Naive thymus-derived CD8-positive, alpha-beta T cell (primary cell): ENCODE measurements at regions of chr6 and their contacts with region 1.

Region 1: GRCh38 chr6:53335208-53335994 is 13.3 kb downstream of the ELOVL5 start:
- DNase-seq: peak; percentile 28 to 89 (median 72)
- ATAC-seq: peak; percentile 73 to 85
- H3K4me3 Mint-ChIP-seq: peak overlapping the region; percentile 84 to 99 (median 90)
- H3K27ac Mint-ChIP-seq: peak overlapping the region; percentile 96 to 100 (median 100)
- H3K4me1 Mint-ChIP-seq: peaks cover 43 to 96% (median 88%) of the 10 kb centered on the region in 4 donors
- H3K27me3 Mint-ChIP-seq: no peaks in the 10 kb centered on the region

Region 2: DNA sequence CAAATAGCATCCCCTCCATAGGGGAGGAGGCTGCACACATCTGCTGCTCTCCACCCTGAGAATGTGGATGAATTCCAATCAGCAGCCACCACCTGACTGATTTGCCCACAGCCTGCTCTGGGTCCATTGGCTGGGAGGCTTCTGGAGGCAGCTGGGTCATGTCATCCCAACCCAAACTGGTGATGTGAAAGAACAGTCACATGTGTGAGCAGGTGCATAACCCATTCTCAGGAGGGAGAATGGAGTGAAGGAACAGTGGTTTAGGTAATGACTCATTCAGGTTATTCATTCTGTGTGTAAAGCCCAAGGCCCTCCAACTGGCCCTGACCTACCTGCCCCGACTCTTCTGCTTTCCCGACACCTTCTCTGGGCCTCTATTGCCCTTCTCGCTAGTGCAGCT is 95.9 kb before region 1 on chr6:
- POLR2A ChIA-PET with region 1: no interaction called
- DNase-seq: no peak
- ATAC-seq: no peak
- H3K4me3 Mint-ChIP-seq: no peak overlapping the region
- H3K27ac Mint-ChIP-seq: peak overlapping the region in 1 of 10 donors; percentile 16
- H3K4me1 Mint-ChIP-seq: peaks cover 10 to 76% (median 25%) of the 10 kb centered on the region in 4 donors
- H3K27me3 Mint-ChIP-seq: no peaks in the 10 kb centered on the region

Region 3: DNA sequence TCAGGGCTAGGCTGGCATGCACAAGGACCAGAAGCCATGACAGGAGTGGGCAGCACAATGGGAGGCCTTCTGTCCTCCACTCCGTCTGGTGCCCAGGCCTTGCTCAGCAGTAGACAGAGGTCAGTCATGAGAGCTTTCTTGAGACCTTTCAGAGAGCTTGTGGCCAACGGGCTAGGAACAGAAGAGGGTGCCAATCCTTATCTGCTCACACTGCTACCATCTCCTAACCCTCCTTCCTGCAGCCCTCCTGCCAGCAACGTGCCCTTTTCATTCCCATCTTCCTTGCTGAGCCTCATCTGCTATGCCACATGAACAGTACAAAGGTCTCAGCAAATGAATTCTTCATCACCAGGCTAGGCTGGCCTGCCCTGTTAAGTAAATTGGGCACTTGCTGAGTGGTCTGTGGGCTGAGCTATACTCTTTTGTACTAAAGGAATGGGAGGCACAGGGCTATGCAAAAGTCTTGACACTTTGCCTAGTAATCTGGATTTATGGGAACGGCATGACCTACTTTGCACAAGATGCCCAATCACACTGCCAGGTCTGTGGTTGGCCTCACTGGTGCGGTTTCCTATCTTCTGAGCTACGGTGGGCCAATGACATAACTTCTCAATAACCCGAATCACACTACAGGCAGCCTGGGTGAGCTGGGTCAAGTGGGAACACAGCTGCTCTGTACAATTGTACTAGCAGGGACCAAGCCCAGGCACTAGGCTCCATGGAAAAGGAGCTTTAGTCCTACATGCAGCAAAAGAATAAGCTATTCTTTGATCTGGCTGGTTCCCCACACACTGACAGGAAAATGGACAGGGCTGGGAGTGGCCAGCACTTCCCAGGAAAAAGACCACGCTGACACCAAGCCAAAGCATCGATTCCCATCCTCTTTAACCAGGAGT is 34.5 kb before region 1 on chr6:
- POLR2A ChIA-PET with region 1: interaction called, 16 read pairs
- DNase-seq: no peak
- ATAC-seq: peak in 1 of 2 donors; percentile 6
- H3K4me3 Mint-ChIP-seq: peak overlapping the region in 8 of 10 donors; percentile 11 to 49 (median 38)
- H3K27ac Mint-ChIP-seq: peak overlapping the region in 9 of 10 donors; percentile 13 to 84 (median 61)
- H3K4me1 Mint-ChIP-seq: peaks cover 36 to 83% (median 65%) of the 10 kb centered on the region in 4 donors
- H3K27me3 Mint-ChIP-seq: no peaks in the 10 kb centered on the region